CD4-positive, alpha-beta memory T cell (primary cell): ENCODE measurements at regions of chr17 and their contacts with region 1.

Region 1: DNA sequence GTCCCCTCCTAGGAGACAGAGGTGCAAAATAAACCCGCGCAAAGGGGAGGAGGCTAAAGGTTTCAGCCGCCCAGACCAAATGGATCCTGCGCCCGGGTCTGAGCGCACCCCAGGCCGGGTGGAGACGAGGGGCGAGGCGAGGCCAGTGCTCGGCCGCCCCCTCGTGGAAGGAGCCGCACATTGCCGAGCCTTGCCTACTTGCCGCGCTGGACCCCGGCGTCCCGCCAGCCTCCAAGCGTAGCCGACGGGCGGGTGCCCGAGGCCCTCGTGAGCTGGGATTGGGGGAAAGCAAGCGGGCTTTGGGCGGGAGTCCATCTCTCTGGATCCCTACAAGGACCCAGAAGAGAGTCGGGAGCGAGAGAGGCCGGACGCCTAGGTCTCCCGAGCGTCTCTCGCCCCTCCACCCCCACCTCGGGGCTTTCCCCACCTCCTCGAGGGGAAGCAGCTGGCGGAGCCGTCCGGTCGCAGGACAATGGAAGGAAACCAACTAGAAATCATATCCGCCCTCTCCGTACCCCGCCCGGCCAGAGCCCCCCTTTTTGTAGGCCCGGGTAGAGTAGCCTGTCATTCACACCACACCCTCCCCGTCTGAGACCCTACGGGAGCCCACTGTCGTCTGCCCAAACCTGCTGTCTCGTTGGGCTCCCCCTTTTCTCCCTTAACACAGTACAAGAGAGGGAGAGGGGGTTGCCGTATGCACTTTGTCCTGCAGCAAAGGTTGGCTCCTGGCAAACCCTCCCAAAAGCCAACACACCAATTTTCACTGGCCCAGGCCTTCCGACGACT is 664 bp upstream of the BCL6B start:
- DNase-seq: peak; percentile 73 to 79 (median 74)
- H3K4me3 ChIP-seq: peak overlapping the region; percentile 6 to 37
- H3K4me3 Mint-ChIP-seq: peak overlapping the region; percentile 63 to 88 (median 76)
- H3K27ac ChIP-seq: no peak overlapping the region
- H3K27ac Mint-ChIP-seq: peak overlapping the region; percentile 81 to 97 (median 91)
- H3K4me1 ChIP-seq: peaks cover 42% of the 10 kb centered on the region
- H3K4me1 Mint-ChIP-seq: peaks cover 21 to 60% (median 38%) of the 10 kb centered on the region in 4 donors
- H3K27me3 ChIP-seq: no peaks in the 10 kb centered on the region
- H3K27me3 Mint-ChIP-seq: peaks cover 0 to 3% of the 10 kb centered on the region in 2 donors

Region 2: DNA sequence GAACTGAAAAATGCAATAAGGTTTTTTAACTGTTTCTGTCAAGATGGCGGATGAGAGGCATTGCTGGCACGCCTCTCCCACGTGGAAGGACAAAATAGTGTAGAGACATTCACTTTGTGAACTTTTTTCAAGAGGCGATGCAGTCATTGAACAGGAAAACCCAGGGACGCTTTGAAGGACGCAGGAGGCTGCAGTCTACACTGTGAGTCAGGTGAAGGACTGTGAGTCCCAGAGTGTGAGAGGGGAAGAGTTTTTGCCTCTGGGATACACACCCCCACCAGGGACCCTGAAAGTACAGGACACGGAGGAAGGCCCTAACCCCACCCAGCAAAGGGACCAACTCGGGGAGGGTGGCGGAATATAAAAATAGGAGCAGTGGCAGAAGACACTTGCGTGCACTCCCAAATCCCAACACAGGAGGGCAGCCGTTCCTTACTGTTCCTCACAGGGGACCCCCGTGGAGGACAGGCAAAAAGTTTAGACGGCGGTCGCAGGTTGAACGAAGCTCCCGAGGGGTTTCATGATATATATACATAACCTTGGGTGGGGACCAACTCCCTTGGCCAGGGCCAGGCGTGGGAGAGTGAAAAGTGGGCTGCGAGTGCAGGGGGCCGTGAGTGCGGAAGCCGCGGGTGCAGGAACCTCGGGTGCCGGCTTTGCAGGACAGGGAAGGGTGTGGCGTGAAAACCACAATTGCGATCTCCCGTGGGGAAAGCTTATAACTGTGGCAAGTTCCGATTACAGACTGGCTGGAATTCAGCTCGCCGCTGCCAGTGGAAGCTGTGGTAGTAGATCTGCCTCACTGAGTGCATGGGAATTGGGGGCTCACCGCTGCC is 108.4 kb before region 1 on chr17:
- CTCF ChIA-PET with region 1: interaction called, 64 read pairs
- POLR2A ChIA-PET with region 1: interaction called, 8 read pairs
- intact Hi-C with region 1: loop called (anchors 1 kb)
- DNase-seq: peak; percentile 58 to 68 (median 65)
- H3K4me3 ChIP-seq: peak overlapping the region in 1 of 2 donors; percentile 27
- H3K4me3 Mint-ChIP-seq: peak overlapping the region; percentile 66 to 89 (median 85)
- H3K27ac ChIP-seq: no peak overlapping the region
- H3K27ac Mint-ChIP-seq: peak overlapping the region in 3 of 7 donors; percentile 14 to 82 (median 79)
- H3K4me1 ChIP-seq: peaks cover 7% of the 10 kb centered on the region
- H3K4me1 Mint-ChIP-seq: peaks cover 8 to 24% (median 17%) of the 10 kb centered on the region in 4 donors
- H3K27me3 ChIP-seq: no peaks in the 10 kb centered on the region
- H3K27me3 Mint-ChIP-seq: peaks cover 13 to 22% of the 10 kb centered on the region in 2 donors

Region 3: DNA sequence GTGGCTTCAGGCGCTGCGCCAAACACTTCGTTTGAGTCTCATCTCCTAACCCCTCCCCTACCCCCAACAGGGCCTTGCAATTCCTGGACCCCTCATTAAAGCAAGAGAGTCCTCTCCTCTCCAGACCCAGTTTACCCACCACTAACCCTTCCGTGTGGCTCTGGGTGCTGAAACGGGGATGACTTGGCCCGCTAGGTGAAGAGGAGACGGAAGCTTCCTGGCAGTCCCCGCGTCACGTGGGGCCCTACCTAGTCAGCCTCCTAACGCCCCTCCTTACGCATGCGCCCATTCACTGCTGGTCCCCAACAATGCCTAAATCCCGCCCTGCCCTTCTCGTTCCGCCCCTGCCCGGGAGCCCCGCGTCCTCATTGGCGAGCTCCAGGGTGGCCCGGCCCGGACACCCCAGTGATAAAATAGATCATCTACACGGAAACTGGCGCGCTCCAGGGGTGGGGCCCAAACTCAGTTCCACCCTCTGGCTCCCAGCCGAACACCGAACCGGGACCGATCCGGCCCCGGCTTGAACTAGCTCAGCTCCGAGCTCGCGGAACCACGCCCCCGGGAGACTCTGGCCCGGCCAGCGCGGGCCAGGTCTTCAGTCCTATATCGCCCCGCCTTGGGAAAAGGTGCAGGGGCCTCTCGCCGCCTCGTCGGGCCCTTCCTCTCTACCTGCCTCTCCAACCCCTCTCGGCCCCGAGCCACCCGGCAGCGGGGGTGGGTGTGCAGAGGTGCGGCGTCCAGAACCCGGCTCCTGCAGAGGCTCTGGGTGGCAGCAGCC is 13.6 kb after region 1 on chr17 and contains the start of gene SLC16A13:
- CTCF ChIA-PET with region 1: interaction called, 20 read pairs
- POLR2A ChIA-PET with region 1: interaction called, 37 read pairs
- intact Hi-C with region 1: loop called (anchors 1 kb)
- DNase-seq: peak; percentile 97 to 100 (median 98)
- H3K4me3 ChIP-seq: peak within 1 kb of the TSS; percentile 32 to 81
- H3K4me3 Mint-ChIP-seq: peak within 1 kb of the TSS; percentile 90 to 96 (median 94)
- H3K27ac ChIP-seq: peak within 1 kb of the TSS; percentile 87
- H3K27ac Mint-ChIP-seq: peak within 1 kb of the TSS; percentile 97 to 99 (median 98)
- H3K4me1 ChIP-seq: peaks cover 65% of the 10 kb centered on the region
- H3K4me1 Mint-ChIP-seq: peaks cover 25 to 81% (median 49%) of the 10 kb centered on the region in 4 donors
- H3K27me3 ChIP-seq: no peaks in the 10 kb centered on the region
- H3K27me3 Mint-ChIP-seq: no peaks in the 10 kb centered on the region
- total RNA-seq, gene SLC16A13: 13.1 to 13.7 TPM

Region 4: DNA sequence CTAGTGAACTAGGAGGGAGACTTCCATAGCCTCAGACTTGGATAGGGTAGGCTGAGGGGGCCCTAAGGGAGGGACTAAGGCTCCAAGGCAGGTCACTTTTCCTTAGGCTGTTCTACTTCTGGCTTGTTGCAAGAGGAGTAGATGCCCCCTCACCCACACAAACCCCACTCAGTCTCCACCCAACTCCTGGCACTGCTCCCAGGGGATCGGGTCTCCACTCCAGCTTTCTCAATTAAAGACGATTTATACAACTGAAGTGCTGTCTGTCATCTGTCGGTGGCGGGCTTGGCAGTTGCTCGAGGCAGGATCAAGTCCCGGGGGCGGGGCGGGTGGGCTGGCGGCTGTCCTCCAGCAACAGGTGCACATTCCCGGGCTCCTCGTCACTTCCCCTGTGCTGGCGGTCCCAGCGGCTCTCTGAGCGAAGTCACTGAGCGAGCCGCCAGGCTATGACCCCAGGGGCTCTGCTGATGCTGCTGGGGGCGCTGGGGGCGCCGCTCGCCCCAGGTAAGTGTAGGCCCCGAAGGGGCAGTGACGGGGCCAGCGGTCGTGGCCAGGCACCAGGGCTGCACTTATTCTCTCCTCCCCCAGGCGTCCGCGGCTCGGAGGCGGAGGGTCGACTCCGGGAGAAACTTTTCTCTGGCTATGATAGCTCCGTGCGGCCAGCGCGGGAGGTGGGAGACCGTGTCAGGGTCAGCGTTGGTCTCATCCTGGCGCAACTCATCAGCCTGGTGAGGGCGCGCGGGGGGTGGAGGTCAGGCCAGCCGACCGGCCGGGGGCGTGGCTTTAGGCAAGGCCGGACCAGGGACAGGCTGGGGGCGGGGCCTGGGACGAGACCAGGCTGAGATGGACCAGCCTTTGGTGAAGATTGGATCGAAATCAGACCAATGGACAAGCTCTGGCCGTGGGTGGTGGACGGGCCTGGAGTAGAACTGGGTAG is 422.8 kb after region 1 on chr17 and contains the start of gene CHRNB1:
- CTCF ChIA-PET with region 1: no interaction called
- POLR2A ChIA-PET with region 1: no interaction called
- intact Hi-C with region 1: no loop called
- DNase-seq: peak in 1 of 5 donors; percentile 16
- H3K4me3 ChIP-seq: peak within 1 kb of the TSS in 1 of 2 donors; percentile 11
- H3K4me3 Mint-ChIP-seq: peak within 1 kb of the TSS; percentile 75 to 88 (median 83)
- H3K27ac ChIP-seq: no peak within 1 kb of the TSS
- H3K27ac Mint-ChIP-seq: peak within 1 kb of the TSS in 5 of 7 donors; percentile 29 to 76 (median 57)
- H3K4me1 ChIP-seq: peaks cover 31% of the 10 kb centered on the region
- H3K4me1 Mint-ChIP-seq: peaks cover 11 to 40% (median 28%) of the 10 kb centered on the region in 4 donors
- H3K27me3 ChIP-seq: peaks cover 45% of the 10 kb centered on the region
- H3K27me3 Mint-ChIP-seq: peaks cover 39 to 58% of the 10 kb centered on the region in 2 donors
- total RNA-seq, gene CHRNB1: 9.1 to 9.5 TPM